ENCODE measurements at regions of chr2 and their contacts with region 1.

Region 1: DNA sequence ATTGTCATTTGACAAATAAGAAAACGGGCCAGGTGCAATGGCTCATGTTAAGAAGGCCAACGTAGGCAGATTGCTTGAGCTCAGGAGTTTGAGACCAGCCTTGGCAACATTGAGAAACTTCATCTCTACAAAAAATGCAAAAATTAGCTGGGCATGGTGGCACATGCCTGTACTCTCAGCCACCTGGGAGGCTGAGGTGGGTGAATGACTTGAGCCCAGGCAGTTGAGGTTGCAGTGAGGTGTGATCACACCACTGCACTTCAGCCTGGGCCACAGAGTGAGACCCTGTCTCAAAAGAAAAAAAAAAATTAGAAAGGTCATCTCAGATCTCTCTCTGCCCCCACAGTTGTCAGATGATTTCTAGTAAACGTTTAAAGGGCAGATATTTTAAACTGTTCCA is 4.4 kb downstream of the SESTD1 start:
- DNase-seq: no peak
- ATAC-seq: no peak
- H3K4me3 ChIP-seq: no peak overlapping the region
- H3K4me3 Mint-ChIP-seq: no peak overlapping the region
- H3K27ac ChIP-seq: no peak overlapping the region
- H3K27ac Mint-ChIP-seq: no peak overlapping the region
- H3K4me1 ChIP-seq: peaks cover 10% of the 10 kb centered on the region
- H3K4me1 Mint-ChIP-seq: peaks cover 14% of the 10 kb centered on the region
- H3K27me3 ChIP-seq: peaks cover 0 to 12% of the 10 kb centered on the region in 2 experiments
- H3K27me3 Mint-ChIP-seq: peaks cover 10% of the 10 kb centered on the region
- CTCF ChIP-seq: no peak

Region 2: DNA sequence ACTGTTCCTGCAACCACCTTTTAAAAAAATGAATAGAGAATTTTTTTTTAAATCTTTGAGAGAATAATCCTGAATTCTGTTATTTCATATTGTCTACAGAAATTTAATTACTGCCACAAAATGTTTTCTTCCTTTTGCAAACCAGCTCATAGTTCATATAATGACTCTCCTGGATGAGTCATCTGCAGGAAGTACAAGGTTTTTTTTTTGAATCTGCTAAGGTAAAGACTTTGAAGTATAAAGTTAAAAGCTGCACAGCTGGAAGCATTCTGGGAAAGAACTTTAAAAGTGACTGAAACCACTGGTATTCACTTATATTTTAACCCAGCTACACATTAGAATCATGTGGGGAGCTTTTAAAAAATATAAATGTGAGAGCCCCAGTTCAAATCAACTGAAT is 21.0 kb before region 1 on chr2:
- CTCF ChIA-PET with region 1: no interaction called
- POLR2A ChIA-PET with region 1: interaction called, 3 read pairs
- intact Hi-C with region 1: loop called in 1 of 2 experiments (anchors 1 kb)
- DNase-seq: peak in 3 of 14 experiments; percentile 20 to 53 (median 48)
- ATAC-seq: peak; percentile 92
- H3K4me3 ChIP-seq: no peak overlapping the region
- H3K4me3 Mint-ChIP-seq: no peak overlapping the region
- H3K27ac ChIP-seq: no peak overlapping the region
- H3K27ac Mint-ChIP-seq: no peak overlapping the region
- H3K4me1 ChIP-seq: no peaks in the 10 kb centered on the region
- H3K4me1 Mint-ChIP-seq: peaks cover 29% of the 10 kb centered on the region
- H3K27me3 ChIP-seq: no peaks in the 10 kb centered on the region
- H3K27me3 Mint-ChIP-seq: no peaks in the 10 kb centered on the region
- CTCF ChIP-seq: no peak

Region 3: GRCh38 chr2:179311101-179311500 is 50.9 kb after region 1 on chr2:
- CTCF ChIA-PET with region 1: no interaction called
- POLR2A ChIA-PET with region 1: no interaction called
- intact Hi-C with region 1: no loop called
- DNase-seq: no peak
- ATAC-seq: no peak
- H3K4me3 ChIP-seq: no peak overlapping the region
- H3K4me3 Mint-ChIP-seq: no peak overlapping the region
- H3K27ac ChIP-seq: no peak overlapping the region
- H3K27ac Mint-ChIP-seq: no peak overlapping the region
- H3K4me1 ChIP-seq: no peaks in the 10 kb centered on the region
- H3K4me1 Mint-ChIP-seq: no peaks in the 10 kb centered on the region
- H3K27me3 ChIP-seq: peaks cover 0 to 4% of the 10 kb centered on the region in 2 experiments
- H3K27me3 Mint-ChIP-seq: peaks cover 6% of the 10 kb centered on the region
- CTCF ChIP-seq: no peak

Region 4: DNA sequence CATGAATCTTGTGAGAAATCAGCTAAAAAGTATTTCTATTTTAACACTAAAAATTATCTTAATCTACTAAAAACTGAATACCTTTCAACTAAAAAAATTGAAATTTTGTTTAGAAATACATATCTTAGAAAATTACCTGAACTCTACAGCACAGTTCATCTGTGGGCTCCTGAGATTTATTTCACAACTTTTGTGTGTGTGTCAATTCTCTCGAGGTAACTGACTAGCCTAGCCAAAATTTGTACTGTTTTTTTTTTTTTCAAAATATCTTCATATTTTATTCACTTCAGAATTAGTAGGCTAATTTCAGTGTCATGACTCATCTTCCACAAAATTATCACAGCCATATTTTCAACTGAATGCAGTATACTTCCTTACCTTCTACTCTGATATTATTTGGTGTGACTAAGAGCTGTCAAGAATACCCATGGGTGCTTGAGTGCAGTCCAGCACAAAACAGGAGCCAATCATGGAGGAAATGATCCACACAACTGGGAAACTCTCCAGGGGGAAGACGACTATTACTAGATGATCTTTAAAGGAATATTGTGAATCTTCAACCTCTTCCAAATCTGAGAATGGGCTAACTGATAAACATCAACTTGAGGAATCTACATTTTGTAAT is 426.6 kb after region 1 on chr2:
- CTCF ChIA-PET with region 1: no interaction called
- POLR2A ChIA-PET with region 1: no interaction called
- intact Hi-C with region 1: no loop called
- DNase-seq: no peak
- ATAC-seq: no peak
- H3K4me3 ChIP-seq: no peak overlapping the region
- H3K4me3 Mint-ChIP-seq: no peak overlapping the region
- H3K27ac ChIP-seq: no peak overlapping the region
- H3K27ac Mint-ChIP-seq: no peak overlapping the region
- H3K4me1 ChIP-seq: no peaks in the 10 kb centered on the region
- H3K4me1 Mint-ChIP-seq: no peaks in the 10 kb centered on the region
- H3K27me3 ChIP-seq: no peaks in the 10 kb centered on the region
- H3K27me3 Mint-ChIP-seq: peaks cover 4% of the 10 kb centered on the region
- CTCF ChIP-seq: no peak